ENCODE measurements at regions of chr11 and their contacts with region 1.

Region 1: DNA sequence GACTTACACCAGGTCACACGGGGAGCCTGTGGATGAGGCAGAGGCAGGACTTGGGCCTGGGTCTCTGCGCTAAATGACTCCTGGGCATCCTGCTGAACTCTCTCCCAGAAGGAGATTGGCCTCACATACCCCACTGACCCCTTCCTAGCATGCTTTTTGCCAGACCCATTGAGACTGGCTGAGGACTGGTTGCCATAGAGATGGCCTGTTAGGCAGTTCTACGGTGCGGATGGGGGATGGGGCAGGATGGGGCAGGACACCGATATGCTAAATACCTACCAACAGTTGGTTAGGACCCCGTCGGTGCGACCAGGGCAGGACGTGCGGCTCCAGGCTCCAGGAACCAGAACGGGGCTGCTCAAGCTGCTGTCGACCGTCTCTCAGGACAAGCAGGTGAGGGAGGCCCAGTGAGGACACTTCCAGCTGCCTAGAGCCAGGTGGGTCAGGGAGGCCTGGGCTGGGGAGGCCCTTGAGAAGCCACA is at the start of gene TSGA10IP:
- DNase-seq: peak; percentile 33 to 73
- H3K4me3 ChIP-seq: peak within 1 kb of the TSS; percentile 3 to 54 (median 30); a peak in 7 of 8 replicates
- H3K27ac ChIP-seq: peak within 1 kb of the TSS; percentile 80
- H3K4me1 ChIP-seq: peaks cover 3 to 25% (median 15%) of the 10 kb centered on the region in 4 experiments
- H3K27me3 ChIP-seq: no peaks in the 10 kb centered on the region
- CTCF ChIP-seq: no peak
- EP300 ChIP-seq: peak in 1 of 2 experiments; percentile 81; a peak in 1 of 3 replicates
- POLR2A ChIP-seq: peak; percentile 28 to 59; a peak in 2 of 3 replicates
- RAD21 ChIP-seq: peak in 1 of 2 experiments; percentile 5; a peak in 1 of 4 replicates
- total RNA-seq, gene TSGA10IP: 1.3 and 1.9 TPM in 2 replicates

Region 2: DNA sequence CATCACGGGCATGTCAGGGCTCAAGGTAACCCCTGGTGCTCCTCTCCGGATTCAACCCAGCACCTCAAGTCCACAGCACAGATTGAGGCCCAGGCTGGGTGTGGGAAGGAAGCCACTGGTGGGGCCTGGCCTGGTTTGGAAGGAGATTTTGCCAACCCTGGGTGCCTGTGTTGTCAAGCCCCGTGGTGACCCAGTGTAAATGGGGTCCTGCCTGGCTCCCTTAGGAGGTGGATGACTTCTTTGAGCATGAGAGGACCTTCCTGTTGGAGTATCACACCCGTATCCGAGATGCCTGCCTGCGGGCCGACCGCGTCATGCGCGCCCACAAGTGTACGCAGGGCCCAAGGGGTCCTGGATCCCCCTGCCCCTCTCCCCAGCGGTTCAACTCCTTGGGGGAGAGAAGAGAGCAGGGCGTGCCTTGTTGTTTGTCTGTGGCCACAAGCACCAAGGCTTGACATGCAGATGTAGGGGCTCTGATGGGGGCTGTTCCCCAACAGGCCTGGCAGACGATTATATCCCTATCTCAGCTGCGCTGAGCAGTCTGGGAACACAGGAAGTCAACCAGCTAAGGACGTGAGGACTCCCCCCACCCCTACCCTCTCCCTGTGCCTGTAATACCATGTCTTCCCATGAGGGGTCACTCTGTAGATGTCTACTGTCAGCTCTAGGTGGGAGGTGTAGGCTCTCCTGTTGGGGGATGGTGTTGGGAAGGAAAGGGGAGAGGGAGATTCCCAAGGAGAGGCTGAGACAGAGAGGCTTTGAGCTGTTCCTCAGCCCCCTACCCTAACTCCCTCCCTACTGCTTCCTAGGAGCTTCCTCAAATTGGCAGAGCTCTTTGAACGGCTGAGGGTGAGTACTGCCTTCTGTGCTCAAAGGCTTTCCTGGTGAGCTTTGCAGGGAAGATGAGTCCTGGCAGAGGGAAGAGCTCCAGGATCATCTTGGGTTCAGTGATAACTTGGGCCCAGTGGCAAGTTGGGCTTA is 94.3 kb before region 1 on chr11:
- CTCF ChIA-PET with region 1: no interaction called
- POLR2A ChIA-PET with region 1: no interaction called
- DNase-seq: peak in 1 of 2 experiments; percentile 93
- H3K4me3 ChIP-seq: no peak overlapping the region
- H3K27ac ChIP-seq: no peak overlapping the region
- H3K4me1 ChIP-seq: peaks cover 0 to 5% (median under 1%) of the 10 kb centered on the region in 4 experiments; a peak in 5 of 7 replicates
- H3K27me3 ChIP-seq: no peaks in the 10 kb centered on the region; a peak in 1 of 7 replicates
- CTCF ChIP-seq: peak in 2 of 3 experiments; percentile 69 to 88; a peak in 3 of 4 replicates
- EP300 ChIP-seq: no peak
- POLR2A ChIP-seq: peak in 1 of 2 experiments; percentile 27; a peak in 2 of 3 replicates
- RAD21 ChIP-seq: peak; percentile 32 to 48; a peak in 3 of 4 replicates

Region 3: DNA sequence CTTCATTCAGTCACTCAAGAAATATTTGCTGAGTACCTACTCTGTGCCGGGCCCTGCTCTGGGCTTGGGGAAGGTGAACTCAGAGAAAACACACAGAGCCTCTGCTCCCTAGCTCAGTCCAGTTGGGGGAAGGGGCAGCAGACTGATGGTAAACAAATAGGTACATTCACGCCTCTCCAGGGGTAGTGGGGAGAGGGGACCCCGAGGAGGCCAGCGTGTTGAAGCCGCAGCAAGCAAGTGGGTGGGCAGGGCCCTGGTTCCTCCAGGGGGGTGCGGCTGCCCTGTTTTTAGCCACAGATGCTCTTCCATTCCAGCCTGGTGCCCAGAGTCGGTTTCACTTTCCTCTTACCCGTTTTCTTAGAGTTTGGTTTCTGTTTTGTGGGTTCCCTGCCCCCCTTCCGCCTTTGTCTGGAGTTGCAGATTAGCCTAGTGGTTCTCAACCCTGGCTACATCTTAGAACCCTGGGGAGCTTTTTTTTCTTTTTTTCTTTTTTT is 17.5 kb before region 1 on chr11:
- CTCF ChIA-PET with region 1: interaction called, 18 read pairs
- POLR2A ChIA-PET with region 1: interaction called, 10 read pairs
- DNase-seq: no peak
- H3K4me3 ChIP-seq: no peak overlapping the region
- H3K27ac ChIP-seq: peak overlapping the region; percentile 41; the same call in 1 of the 2 replicates
- H3K4me1 ChIP-seq: peaks cover 0 to 8% (median 5%) of the 10 kb centered on the region in 4 experiments; a peak in 5 of 7 replicates
- H3K27me3 ChIP-seq: no peaks in the 10 kb centered on the region
- CTCF ChIP-seq: no peak
- EP300 ChIP-seq: no peak
- POLR2A ChIP-seq: no peak
- RAD21 ChIP-seq: no peak

Region 4: GRCh38 chr11:65958774-65959420 is 13.4 kb after region 1 on chr11:
- CTCF ChIA-PET with region 1: interaction called, 16 read pairs
- POLR2A ChIA-PET with region 1: interaction called, 13 read pairs
- DNase-seq: no peak
- H3K4me3 ChIP-seq: no peak overlapping the region
- H3K27ac ChIP-seq: no peak overlapping the region
- H3K4me1 ChIP-seq: peaks cover 0 to 14% (median 3%) of the 10 kb centered on the region in 4 experiments; a peak in 5 of 7 replicates
- H3K27me3 ChIP-seq: no peaks in the 10 kb centered on the region
- CTCF ChIP-seq: no peak
- EP300 ChIP-seq: no peak
- POLR2A ChIP-seq: no peak
- RAD21 ChIP-seq: no peak

Region 5: GRCh38 chr11:66183494-66184048 is 238.1 kb after region 1 on chr11:
- CTCF ChIA-PET with region 1: no interaction called
- POLR2A ChIA-PET with region 1: no interaction called
- DNase-seq: no peak
- H3K4me3 ChIP-seq: no peak overlapping the region
- H3K27ac ChIP-seq: no peak overlapping the region
- H3K4me1 ChIP-seq: no peaks in the 10 kb centered on the region
- H3K27me3 ChIP-seq: no peaks in the 10 kb centered on the region
- CTCF ChIP-seq: no peak
- EP300 ChIP-seq: no peak
- POLR2A ChIP-seq: no peak; a peak in 1 of 3 replicates
- RAD21 ChIP-seq: no peak